CD4-positive, alpha-beta memory T cell (primary cell): ENCODE measurements at regions of chr16 and their contacts with region 1.

Region 1: GRCh38 chr16:68590201-68590994 is 51.3 kb downstream of the ZFP90 start:
- DNase-seq: peak; percentile 22 to 42 (median 33)
- H3K4me3 ChIP-seq: no peak overlapping the region
- H3K4me3 Mint-ChIP-seq: peak overlapping the region in 6 of 8 donors; percentile 29 to 73 (median 49)
- H3K27ac ChIP-seq: no peak overlapping the region
- H3K27ac Mint-ChIP-seq: no peak overlapping the region
- H3K4me1 ChIP-seq: no peaks in the 10 kb centered on the region
- H3K4me1 Mint-ChIP-seq: peaks cover 0 to 4% (median 3%) of the 10 kb centered on the region in 4 donors
- H3K27me3 ChIP-seq: no peaks in the 10 kb centered on the region
- H3K27me3 Mint-ChIP-seq: peaks cover 1% of the 10 kb centered on the region in 2 donors

Region 2: DNA sequence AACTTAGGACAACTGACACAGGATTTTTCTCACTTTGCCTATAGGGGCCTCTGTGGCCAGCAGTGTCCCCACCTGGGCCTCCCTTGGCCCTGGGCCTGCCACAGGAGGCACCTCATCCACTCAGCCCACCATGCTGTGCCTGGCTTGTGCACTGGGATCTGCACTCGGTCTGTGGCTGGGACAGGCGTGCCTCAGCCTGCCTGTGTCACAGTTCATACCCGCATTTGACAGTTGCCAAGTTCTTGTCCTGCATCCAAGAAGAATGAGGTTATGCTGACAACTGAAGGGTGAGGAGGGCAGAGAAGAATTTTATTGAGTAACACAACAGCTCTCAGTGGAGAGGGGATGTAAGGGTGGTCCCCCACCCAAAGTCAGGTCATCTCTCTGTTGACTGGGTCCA is 15.3 kb before region 1 on chr16:
- CTCF ChIA-PET with region 1: interaction called, 14 read pairs
- POLR2A ChIA-PET with region 1: no interaction called
- intact Hi-C with region 1: no loop called
- DNase-seq: no peak
- H3K4me3 ChIP-seq: no peak overlapping the region
- H3K4me3 Mint-ChIP-seq: no peak overlapping the region
- H3K27ac ChIP-seq: no peak overlapping the region
- H3K27ac Mint-ChIP-seq: no peak overlapping the region
- H3K4me1 ChIP-seq: no peaks in the 10 kb centered on the region
- H3K4me1 Mint-ChIP-seq: no peaks in the 10 kb centered on the region
- H3K27me3 ChIP-seq: no peaks in the 10 kb centered on the region
- H3K27me3 Mint-ChIP-seq: no peaks in the 10 kb centered on the region